Posterior cingulate gyrus (tissue), 11 donors: ENCODE measurements at regions of chr1 and their contacts with region 1.

Region 1: DNA sequence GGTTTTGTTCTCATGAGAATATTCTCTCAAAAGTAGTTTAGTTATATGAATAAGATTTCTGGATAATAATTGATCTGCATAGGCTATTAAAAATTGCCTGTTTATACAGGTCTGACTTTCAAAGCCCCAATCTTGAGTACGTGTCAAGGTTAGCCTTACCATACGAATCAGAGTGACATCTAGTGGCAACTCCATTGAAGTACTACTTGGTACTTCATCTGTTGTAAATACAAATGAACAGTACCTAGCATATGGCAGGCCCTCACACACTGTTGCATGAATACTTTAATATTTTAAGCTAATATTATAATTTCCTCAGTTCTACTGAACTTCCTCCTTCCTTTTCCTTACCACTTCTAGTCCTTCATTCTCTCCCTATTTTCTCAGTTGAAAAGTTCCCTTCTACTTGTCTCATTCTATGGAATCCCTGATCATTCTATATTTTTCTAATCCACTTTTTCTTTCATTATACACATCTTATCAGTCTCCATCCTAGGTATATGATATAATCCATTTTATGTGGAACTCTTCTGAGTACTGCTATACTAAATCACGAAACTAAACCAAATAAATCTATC is 101.2 kb downstream of the AKT3 start:
- DNase-seq: no peak

Region 2: DNA sequence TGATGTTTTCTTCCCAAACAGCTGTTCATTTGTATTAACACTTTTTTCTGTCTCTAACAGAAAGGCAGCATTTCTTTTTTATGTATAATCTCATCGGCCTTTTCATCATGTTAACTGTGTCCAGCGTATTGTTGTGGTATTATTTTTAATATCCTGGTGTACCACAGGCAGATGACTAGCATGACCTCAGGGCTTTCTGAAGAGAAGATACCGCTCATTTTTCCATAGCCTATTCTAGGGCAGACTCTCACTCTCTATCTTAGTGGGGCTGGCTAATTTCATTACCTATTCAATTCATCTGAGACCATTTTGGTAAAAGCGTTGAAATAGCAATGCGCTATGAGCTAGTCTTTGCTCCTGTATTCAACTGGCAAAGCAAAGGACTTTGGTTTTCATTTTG is 283.1 kb before region 1 on chr1:
- intact Hi-C with region 1: no loop called
- DNase-seq: no peak

Region 3: GRCh38 chr1:243475966-243476365 is 272.8 kb before region 1 on chr1:
- intact Hi-C with region 1: loop called (anchors 1 kb)
- DNase-seq: peak in 8 of 10 donors; percentile 68 to 96 (median 78)

Region 4: GRCh38 chr1:243713470-243714186 is 35.2 kb before region 1 on chr1:
- intact Hi-C with region 1: loop called (anchors 2 kb)
- DNase-seq: peak in 6 of 10 donors; percentile 18 to 83 (median 40)

Region 5: DNA sequence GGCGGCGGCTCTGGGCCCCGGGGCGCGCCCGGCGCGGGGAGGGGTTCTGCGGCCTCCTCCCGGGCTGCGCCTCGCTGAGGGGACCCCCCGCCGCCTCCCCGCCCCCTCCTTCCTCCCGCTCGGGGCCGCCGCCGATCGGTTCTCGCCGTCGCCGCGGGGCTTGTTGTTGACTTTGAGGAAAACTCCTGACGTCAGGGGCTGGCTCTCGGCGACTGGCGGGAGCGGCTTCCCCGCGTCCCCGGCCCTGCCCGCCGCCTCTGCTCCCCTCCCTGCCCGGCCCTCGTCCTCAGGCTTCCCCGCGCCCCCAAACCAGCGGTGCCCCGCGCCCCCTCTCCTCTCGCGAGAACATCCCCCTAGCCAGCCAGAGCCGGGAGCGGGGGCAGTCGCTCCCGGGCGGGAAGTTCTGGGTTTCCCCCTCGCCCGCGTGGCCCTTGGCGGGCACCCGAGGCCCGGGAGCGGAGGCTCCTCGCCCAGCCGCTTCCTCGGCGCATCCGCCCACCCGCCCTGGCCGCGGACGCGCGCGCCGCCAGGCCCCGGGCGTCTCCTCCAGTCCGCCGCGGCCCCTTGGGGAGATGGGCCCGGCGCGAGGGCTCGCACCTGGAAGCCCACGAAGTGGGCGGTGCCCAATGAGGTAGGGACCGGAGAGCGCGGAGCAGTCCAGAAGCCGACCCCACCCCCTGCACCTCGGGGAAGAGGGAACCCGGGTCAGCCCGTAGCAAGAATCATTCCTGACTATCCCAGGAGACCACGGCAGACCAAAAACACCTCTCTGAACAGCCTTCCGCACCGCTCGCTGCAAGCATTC is 101.9 kb after region 1 on chr1:
- intact Hi-C with region 1: no loop called
- DNase-seq: peak; percentile 62 to 95 (median 76)